ENCODE measurements at regions of chr10 and their contacts with region 1.

Region 1: GRCh38 chr10:24201503-24202180 is 7.3 kb upstream of the KIAA1217 start:
- DNase-seq: no peak
- ATAC-seq: no peak
- H3K4me3 ChIP-seq: no peak overlapping the region
- H3K4me3 Mint-ChIP-seq: no peak overlapping the region
- H3K27ac ChIP-seq: no peak overlapping the region
- H3K27ac Mint-ChIP-seq: no peak overlapping the region
- H3K4me1 ChIP-seq: no peaks in the 10 kb centered on the region
- H3K4me1 Mint-ChIP-seq: no peaks in the 10 kb centered on the region
- H3K27me3 ChIP-seq: no peaks in the 10 kb centered on the region
- H3K27me3 Mint-ChIP-seq: peaks cover 8 to 24% (median 16%) of the 10 kb centered on the region in 5 donors

Region 2: DNA sequence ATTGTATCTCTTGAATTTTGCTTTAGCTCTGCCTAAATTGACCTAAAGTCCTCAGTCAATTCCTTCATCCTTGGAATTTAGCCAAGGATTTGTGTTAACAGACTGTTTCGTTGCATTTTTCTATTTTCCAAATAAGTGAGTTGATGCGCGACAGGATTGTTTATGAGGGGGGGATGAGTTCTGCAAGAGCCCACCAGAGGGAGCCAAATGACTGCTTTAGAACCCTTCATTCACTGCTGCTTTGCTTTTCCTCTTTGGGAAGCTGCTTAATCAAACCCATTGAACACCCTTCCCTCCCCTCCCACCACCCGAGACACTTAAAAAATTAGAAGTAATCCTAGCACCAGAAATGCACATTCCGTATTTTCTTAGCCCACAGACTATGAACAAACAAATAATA is 1043.3 kb before region 1 on chr10:
- CTCF ChIA-PET with region 1: no interaction called
- POLR2A ChIA-PET with region 1: no interaction called
- intact Hi-C with region 1: loop called (anchors 1 to 2 kb)
- DNase-seq: peak in 7 of 9 donors; percentile 10 to 37 (median 30)
- ATAC-seq: peak; percentile 63
- H3K4me3 ChIP-seq: no peak overlapping the region
- H3K4me3 Mint-ChIP-seq: peak overlapping the region in 2 of 10 donors; percentile 24 to 30
- H3K27ac ChIP-seq: no peak overlapping the region
- H3K27ac Mint-ChIP-seq: no peak overlapping the region
- H3K4me1 ChIP-seq: no peaks in the 10 kb centered on the region
- H3K4me1 Mint-ChIP-seq: peaks cover 0 to 22% (median 0%) of the 10 kb centered on the region in 7 donors
- H3K27me3 ChIP-seq: no peaks in the 10 kb centered on the region
- H3K27me3 Mint-ChIP-seq: peaks cover 16 to 44% (median 34%) of the 10 kb centered on the region in 5 donors

Region 3: DNA sequence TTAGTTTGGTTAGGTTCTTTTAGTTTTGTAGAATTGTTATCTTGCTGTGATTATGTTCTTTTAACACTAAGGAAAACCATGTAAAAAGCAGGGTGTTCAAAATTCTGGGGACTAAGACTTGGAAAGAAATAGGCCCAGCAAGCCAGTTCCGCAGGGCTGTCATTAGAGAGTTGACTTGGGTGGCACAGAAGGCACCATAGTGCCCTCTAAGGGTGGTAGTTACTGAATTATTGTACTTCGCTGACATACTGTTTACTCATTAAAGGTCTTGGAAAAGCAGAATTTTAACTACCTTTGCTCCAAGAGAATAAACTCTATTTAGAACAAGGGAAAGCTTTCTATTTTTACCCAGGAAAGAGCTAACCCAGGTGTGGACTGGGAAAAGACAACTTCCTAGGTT is 676.2 kb before region 1 on chr10:
- CTCF ChIA-PET with region 1: no interaction called
- POLR2A ChIA-PET with region 1: no interaction called
- intact Hi-C with region 1: loop called in 1 of 2 experiments (anchors 2 kb)
- DNase-seq: peak in 1 of 9 donors; percentile 15
- ATAC-seq: peak; percentile 50
- H3K4me3 ChIP-seq: no peak overlapping the region
- H3K4me3 Mint-ChIP-seq: no peak overlapping the region
- H3K27ac ChIP-seq: no peak overlapping the region
- H3K27ac Mint-ChIP-seq: peak overlapping the region in 1 of 9 donors; percentile 72
- H3K4me1 ChIP-seq: no peaks in the 10 kb centered on the region
- H3K4me1 Mint-ChIP-seq: peaks cover 0 to 5% (median 0%) of the 10 kb centered on the region in 7 donors
- H3K27me3 ChIP-seq: no peaks in the 10 kb centered on the region
- H3K27me3 Mint-ChIP-seq: peaks cover 0 to 7% (median 6%) of the 10 kb centered on the region in 5 donors

Region 4: DNA sequence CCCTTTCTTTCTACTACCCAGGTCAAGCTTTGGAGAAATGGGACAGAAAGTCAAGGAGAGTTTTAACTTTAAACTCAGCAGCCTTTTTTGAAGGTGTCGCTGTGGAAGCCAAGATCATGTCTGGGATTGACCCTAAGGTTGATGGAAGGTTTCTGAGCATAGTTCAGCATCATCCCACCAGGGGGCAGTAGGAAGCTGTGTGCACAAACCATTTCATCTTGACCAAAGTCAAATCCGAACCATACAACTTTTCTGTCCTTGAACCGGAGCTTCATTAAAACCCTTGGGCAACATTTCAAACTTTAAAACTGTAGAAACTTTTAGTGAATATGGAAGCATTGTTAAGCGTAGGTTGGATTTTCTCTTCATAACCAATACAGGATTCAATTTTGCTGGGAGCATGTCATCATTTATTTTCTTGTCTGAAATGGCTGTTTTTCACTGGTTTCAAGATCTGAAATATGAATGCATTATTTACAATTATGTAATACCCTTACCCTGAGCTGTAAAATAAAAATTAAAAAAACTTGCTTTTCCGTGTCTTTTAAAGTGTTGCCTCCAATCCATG is 207.1 kb before region 1 on chr10:
- CTCF ChIA-PET with region 1: no interaction called
- POLR2A ChIA-PET with region 1: no interaction called
- intact Hi-C with region 1: loop called in 1 of 2 experiments (anchors 1 kb)
- DNase-seq: peak in 2 of 9 donors; percentile 1 to 33
- ATAC-seq: no peak
- H3K4me3 ChIP-seq: no peak overlapping the region
- H3K4me3 Mint-ChIP-seq: no peak overlapping the region
- H3K27ac ChIP-seq: no peak overlapping the region
- H3K27ac Mint-ChIP-seq: no peak overlapping the region
- H3K4me1 ChIP-seq: no peaks in the 10 kb centered on the region
- H3K4me1 Mint-ChIP-seq: no peaks in the 10 kb centered on the region
- H3K27me3 ChIP-seq: no peaks in the 10 kb centered on the region
- H3K27me3 Mint-ChIP-seq: peaks cover 3 to 7% (median 5%) of the 10 kb centered on the region in 5 donors

Region 5: DNA sequence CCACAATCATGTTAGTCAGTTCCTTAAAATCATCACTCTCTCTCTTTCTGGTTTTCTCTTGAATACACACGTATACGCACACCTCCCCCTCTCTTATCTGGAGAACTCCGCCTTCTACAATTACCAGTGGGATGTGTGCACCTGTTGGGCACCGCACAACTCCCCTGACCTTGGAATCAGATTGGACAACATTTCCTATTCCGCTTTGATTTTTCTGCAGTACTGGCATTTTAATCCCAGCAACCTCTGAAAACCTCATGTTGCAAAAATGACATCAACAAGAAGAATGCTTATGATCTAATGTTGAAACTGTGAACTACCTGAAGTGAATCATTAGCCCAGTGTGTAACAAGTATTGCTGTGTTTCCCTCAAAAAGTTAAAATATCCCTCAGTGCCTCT is 116.9 kb after region 1 on chr10:
- CTCF ChIA-PET with region 1: no interaction called
- POLR2A ChIA-PET with region 1: no interaction called
- intact Hi-C with region 1: no loop called
- DNase-seq: no peak
- ATAC-seq: no peak
- H3K4me3 ChIP-seq: no peak overlapping the region
- H3K4me3 Mint-ChIP-seq: no peak overlapping the region
- H3K27ac ChIP-seq: no peak overlapping the region
- H3K27ac Mint-ChIP-seq: no peak overlapping the region
- H3K4me1 ChIP-seq: no peaks in the 10 kb centered on the region
- H3K4me1 Mint-ChIP-seq: no peaks in the 10 kb centered on the region
- H3K27me3 ChIP-seq: no peaks in the 10 kb centered on the region
- H3K27me3 Mint-ChIP-seq: peaks cover 0 to 12% (median 9%) of the 10 kb centered on the region in 5 donors

Region 6: DNA sequence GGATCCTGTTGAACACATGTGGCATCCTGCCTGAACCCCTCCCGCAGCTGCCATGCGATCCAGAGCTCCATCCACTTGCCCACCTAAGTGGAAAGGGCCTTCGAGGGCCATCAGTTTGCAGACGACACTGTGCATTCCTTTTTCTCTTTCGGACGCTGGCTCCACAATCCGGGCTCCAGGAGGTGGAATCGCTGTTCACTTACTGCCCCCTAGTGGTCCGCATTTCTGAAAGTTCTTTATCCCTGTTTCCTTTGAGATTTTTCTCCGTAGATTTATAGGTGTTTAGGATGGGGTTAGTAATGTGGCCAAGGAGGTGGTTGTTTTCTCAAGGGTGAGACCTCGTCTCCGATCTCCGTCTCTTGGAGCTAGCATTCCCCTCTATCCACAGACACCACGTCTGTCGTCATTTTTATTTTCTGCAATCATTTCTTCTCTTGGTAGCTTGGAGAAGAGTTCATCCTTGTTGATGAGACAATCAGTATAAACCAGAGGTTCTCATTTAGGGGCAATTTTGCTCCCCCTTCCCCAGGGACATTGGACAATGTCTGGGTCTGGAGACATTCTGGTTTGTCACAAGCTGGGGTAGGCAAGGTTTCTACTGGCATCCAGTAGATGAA is 317.4 kb after region 1 on chr10:
- CTCF ChIA-PET with region 1: no interaction called
- POLR2A ChIA-PET with region 1: no interaction called
- intact Hi-C with region 1: loop called in 1 of 2 experiments (anchors 5 kb)
- DNase-seq: peak in 4 of 9 donors; percentile 5 to 42 (median 12)
- ATAC-seq: no peak
- H3K4me3 ChIP-seq: peak overlapping the region; percentile 38
- H3K4me3 Mint-ChIP-seq: peak overlapping the region; percentile 6 to 84 (median 77)
- H3K27ac ChIP-seq: no peak overlapping the region
- H3K27ac Mint-ChIP-seq: peak overlapping the region in 4 of 9 donors; percentile 7 to 90 (median 20)
- H3K4me1 ChIP-seq: no peaks in the 10 kb centered on the region
- H3K4me1 Mint-ChIP-seq: peaks cover 6 to 16% (median 14%) of the 10 kb centered on the region in 7 donors
- H3K27me3 ChIP-seq: no peaks in the 10 kb centered on the region
- H3K27me3 Mint-ChIP-seq: peaks cover 0 to 13% (median 0%) of the 10 kb centered on the region in 5 donors

Region 7: DNA sequence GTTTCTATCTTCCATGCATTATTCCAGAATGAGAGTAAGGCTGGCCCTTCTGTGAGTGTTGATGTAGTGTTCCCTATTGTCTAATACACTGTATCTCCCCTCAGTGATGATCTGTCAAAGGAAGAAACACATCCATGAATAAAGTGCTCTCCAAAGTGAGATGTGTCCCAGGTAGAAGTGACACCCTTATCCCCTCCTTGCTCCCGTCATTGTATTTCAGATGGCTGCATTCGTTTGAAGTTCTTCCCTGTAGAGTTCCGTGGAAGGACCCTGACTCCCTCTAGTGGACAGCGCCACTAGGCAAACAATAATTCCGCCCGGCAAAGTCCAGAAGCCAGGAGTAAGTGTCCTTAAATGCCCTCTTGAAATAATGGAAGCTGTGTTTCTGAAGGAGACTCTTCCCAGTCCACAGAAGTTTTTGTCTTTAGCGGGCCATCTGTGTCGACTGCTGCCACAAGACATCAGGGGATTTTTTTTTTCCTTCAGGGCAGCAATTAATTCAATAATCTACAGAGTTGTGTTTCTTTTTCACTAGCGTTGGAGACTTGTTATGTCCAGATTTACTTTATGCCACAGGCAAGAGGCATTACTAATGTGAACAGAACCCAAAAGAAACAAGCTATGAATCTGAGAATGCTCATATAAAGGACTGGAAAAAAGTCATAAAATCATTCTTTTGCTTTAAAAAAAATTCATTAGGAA is 879.4 kb after region 1 on chr10:
- CTCF ChIA-PET with region 1: no interaction called
- POLR2A ChIA-PET with region 1: no interaction called
- intact Hi-C with region 1: loop called in 1 of 2 experiments (anchors 5 kb)
- DNase-seq: peak; percentile 4 to 53 (median 42)
- ATAC-seq: peak; percentile 79
- H3K4me3 ChIP-seq: no peak overlapping the region
- H3K4me3 Mint-ChIP-seq: no peak overlapping the region
- H3K27ac ChIP-seq: no peak overlapping the region
- H3K27ac Mint-ChIP-seq: no peak overlapping the region
- H3K4me1 ChIP-seq: peaks cover 0 to 4% of the 10 kb centered on the region in 2 donors
- H3K4me1 Mint-ChIP-seq: peaks cover 0 to 8% (median 4%) of the 10 kb centered on the region in 7 donors
- H3K27me3 ChIP-seq: peaks cover 0 to 4% of the 10 kb centered on the region in 2 donors
- H3K27me3 Mint-ChIP-seq: peaks cover 0 to 23% (median 5%) of the 10 kb centered on the region in 5 donors

Measured in naive thymus-derived CD4-positive, alpha-beta T cell (primary cell).